ENCODE measurements at regions of chr13 and their contacts with region 1.

Region 1: DNA sequence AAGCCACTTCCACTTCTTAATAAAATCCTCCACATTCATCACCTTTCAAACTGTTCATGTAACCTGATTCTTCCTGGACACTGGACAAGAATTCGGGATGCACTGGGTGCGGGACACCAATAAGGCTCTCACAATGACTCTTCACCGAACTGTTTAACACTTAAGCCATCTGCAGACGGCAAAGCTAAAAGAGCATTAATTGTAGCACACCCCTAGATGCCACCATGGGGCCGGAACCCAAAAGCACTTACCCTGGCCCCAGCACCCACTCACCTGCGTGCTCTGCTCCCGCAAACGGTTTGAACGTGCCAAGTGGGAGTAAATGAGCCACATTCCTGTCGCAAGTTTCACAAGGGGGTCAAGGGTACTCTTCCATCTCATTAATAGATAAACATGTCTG is 254.3 kb upstream of the PRR20A start:
- DNase-seq: no peak
- ATAC-seq: no peak
- H3K4me3 ChIP-seq: no peak overlapping the region
- H3K4me3 Mint-ChIP-seq: no peak overlapping the region
- H3K27ac ChIP-seq: no peak overlapping the region
- H3K27ac Mint-ChIP-seq: no peak overlapping the region
- H3K4me1 ChIP-seq: no peaks in the 10 kb centered on the region
- H3K4me1 Mint-ChIP-seq: no peaks in the 10 kb centered on the region
- H3K27me3 ChIP-seq: no peaks in the 10 kb centered on the region
- H3K27me3 Mint-ChIP-seq: no peaks in the 10 kb centered on the region

Region 2: DNA sequence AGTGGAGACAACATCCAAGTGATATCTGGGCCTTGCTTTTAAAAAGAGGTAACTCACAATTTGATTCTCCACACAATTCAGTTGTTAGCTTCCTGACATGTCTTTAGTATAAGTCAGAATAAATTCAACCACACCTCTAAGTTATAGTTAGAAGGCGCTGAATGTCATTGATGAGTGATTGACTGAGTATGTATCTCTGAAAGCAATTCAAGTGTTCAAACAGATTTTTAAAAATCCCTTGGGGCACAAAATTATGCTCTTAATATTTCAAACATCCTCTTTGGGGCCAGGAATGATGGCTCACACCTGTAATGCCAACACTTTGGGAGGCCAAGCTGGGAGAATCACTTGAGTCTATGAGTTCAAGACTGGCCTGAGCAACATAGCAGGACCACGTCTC is 117.3 kb after region 1 on chr13:
- CTCF ChIA-PET with region 1: no interaction called
- POLR2A ChIA-PET with region 1: interaction called in 1 of 2 experiments, 11 read pairs
- DNase-seq: no peak
- ATAC-seq: no peak
- H3K4me3 ChIP-seq: no peak overlapping the region
- H3K4me3 Mint-ChIP-seq: no peak overlapping the region
- H3K27ac ChIP-seq: no peak overlapping the region
- H3K27ac Mint-ChIP-seq: no peak overlapping the region
- H3K4me1 ChIP-seq: no peaks in the 10 kb centered on the region
- H3K4me1 Mint-ChIP-seq: no peaks in the 10 kb centered on the region
- H3K27me3 ChIP-seq: no peaks in the 10 kb centered on the region
- H3K27me3 Mint-ChIP-seq: no peaks in the 10 kb centered on the region

Measured in T-cell (primary cell).